Right ventricle myocardium inferior (tissue), 1 donor: ENCODE measurements at regions of chr12 and their contacts with region 1.

Region 1: GRCh38 chr12:1507308-1507707 is 87.1 kb downstream of the FBXL14 start:
- DNase-seq: no peak
- ATAC-seq: no peak

Region 2: GRCh38 chr12:1073652-1074051 is 433.7 kb before region 1 on chr12:
- intact Hi-C with region 1: no loop called
- DNase-seq: no peak
- ATAC-seq: no peak

Region 3: DNA sequence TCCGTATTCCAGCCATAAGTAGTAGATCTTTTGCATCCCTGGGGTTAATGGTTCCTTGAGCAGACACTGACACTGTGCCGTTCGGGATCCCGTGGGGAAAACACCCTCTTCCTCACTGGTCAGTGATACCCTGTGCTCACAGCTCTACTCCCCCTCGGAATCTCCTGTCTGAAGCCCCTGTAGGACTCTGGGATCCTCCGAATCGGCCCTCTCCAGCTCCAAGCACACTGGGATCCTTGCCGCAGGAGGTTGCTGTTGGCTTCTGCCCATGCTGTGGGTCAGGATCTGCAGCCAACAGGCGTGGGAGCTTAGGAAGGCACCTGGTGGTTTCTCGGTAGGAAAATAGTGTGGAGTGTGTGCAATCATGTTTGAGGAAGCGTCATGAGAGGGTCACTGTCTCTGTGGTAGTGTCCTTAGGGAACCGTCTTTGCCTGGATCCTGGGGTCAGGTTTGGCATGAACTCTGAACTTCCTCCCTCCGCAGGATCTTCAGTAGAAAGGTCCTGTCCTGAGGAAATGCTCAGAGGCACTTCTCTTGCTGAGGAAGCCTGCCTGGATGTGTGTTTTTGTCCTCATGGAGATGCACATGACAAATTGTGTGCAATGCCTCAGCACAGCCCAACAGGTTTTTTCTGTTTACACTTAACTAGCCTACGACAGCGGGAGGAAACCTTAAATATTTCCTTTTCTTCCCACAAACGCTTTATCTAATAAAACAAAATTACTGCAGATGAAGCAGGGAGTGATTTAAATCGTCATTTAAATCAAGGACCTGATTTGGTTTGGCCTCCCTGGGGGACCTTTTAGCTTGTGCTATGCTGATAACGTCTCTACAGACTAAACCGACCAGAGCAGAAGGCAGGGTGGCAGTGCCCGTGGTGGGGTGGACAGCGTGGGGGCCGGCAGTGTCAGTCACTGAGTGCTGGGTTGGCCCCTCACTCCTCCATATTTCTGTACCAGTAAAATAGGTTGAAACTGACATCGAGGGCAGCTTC is 68.4 kb after region 1 on chr12:
- intact Hi-C with region 1: loop called (anchors 2 kb)
- DNase-seq: no peak
- ATAC-seq: peak; percentile 7

Region 4: DNA sequence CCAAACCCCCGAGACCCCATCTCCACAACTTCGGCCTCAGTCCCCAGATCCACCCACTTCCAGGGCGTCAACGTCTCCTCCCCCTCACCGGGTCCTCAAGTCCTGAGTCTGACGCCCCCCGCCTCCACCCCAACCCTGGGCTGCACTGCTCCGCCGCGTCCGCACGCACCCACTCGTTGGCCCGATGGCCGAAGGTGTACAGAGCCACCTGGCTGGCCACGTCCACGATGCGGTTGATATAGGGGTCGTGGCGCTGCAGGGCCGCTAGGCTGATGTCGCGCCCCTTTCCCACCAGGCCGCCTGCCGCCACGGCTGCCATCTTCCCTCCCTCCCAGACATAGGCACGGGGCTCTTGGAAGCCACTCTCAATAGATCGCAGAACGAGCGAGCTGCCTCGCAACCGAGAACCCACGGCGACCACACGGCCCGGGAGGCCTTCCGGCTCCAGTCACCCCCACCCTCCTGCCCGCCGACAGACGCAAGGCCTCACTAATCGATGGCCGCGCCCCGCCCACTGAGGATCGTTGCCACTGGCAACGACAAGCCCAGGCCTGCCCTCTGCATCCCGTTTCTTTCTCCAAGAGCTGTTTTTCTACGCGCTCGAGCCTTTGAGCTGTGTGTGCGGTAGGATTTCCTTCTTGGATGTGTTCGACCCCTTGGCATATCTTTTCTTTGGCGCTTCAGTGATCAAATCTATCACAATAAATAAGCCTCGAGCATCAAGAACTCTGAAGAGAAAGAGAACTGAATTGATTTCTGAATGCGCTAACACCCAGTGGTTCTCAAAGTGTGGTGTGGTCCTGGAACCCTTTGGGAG is 497.0 kb after region 1 on chr12 and contains the start of gene DCP1B:
- intact Hi-C with region 1: no loop called
- DNase-seq: peak; percentile 97
- ATAC-seq: peak; percentile 99
- total RNA-seq, gene DCP1B: 2.4 TPM